Mammary epithelial cell (primary cell): ENCODE measurements at regions of chr6 and their contacts with region 1.

Region 1: GRCh38 chr6:158031381-158032353 is 50.0 kb downstream of the SYNJ2 start:
- DNase-seq: no peak
- H3K4me3 ChIP-seq: no peak overlapping the region
- H3K27ac ChIP-seq: peak overlapping the region; percentile 5
- H3K4me1 ChIP-seq: peaks cover 20% of the 10 kb centered on the region
- H3K27me3 ChIP-seq: no peaks in the 10 kb centered on the region
- CTCF ChIP-seq: no peak

Region 2: DNA sequence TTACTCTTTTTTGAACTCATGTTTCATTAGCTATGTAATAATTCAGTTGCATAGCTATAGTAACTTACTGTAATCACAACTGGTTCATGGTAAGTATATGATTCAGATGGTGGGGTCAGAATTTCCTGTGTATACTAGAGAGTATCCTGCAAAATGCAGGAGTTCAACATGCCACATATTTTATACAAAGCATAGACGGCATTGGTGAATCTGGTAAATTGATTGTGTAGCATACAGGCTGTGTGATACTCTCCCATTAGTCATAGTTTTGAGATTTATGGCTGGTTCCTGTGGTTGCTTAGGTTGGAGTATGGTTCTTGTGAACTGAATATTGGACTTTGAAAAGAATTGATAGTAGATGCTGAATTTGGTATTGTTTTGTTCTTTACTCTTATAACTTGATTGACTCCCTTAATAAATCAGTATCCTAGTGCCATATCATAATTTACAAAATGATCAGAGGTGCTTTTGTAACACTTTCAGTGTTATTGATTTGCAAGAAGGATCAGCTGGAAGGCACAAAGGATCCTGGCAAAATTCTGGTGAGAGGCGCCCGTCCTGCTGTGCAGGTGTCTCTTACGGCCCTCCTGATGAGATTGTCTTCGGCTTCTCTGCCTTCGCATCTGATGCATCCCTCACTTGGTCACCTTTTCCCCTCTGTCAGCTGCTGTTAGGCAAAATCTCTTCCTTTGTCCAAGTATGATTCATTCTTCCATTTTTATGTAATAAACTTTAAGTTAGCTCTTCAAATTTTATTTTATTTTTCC is 186.0 kb before region 1 on chr6:
- CTCF ChIA-PET with region 1: no interaction called
- dilution Hi-C with region 1: no loop called
- in situ Hi-C with region 1: no loop called
- intact Hi-C with region 1: no loop called
- DNase-seq: no peak
- H3K4me3 ChIP-seq: no peak overlapping the region
- H3K27ac ChIP-seq: no peak overlapping the region
- H3K4me1 ChIP-seq: peaks cover 38% of the 10 kb centered on the region
- H3K27me3 ChIP-seq: no peaks in the 10 kb centered on the region
- CTCF ChIP-seq: no peak

Region 3: GRCh38 chr6:157974341-157974894 is 57.2 kb before region 1 on chr6:
- CTCF ChIA-PET with region 1: no interaction called
- dilution Hi-C with region 1: loop called (anchors 5 kb)
- in situ Hi-C with region 1: no loop called
- intact Hi-C with region 1: no loop called
- DNase-seq: no peak
- H3K4me3 ChIP-seq: no peak overlapping the region
- H3K27ac ChIP-seq: no peak overlapping the region
- H3K4me1 ChIP-seq: peaks cover under 1% of the 10 kb centered on the region
- H3K27me3 ChIP-seq: no peaks in the 10 kb centered on the region
- CTCF ChIP-seq: no peak